ENCODE measurements at regions of chr6 and their contacts with region 1.

Region 1: GRCh38 chr6:148464319-148465010 is 121.8 kb downstream of the SASH1 start:
- DNase-seq: peak; percentile 83
- H3K4me3 ChIP-seq: no peak overlapping the region
- H3K27ac ChIP-seq: peak overlapping the region in 1 of 4 donors; percentile 50
- H3K4me1 ChIP-seq: peaks cover 0 to 40% (median 28%) of the 10 kb centered on the region in 4 donors
- H3K27me3 ChIP-seq: no peaks in the 10 kb centered on the region
- CTCF ChIP-seq: peak; percentile 84 to 93 (median 87)
- EP300 ChIP-seq: no peak
- POLR2A ChIP-seq: no peak

Region 2: GRCh38 chr6:147506704-147507114 is 957.8 kb before region 1 on chr6:
- intact Hi-C with region 1: loop called (anchors 5 kb)
- DNase-seq: peak; percentile 76
- H3K4me3 ChIP-seq: peak overlapping the region; percentile 38 to 58 (median 56)
- H3K27ac ChIP-seq: no peak overlapping the region
- H3K4me1 ChIP-seq: peaks cover 0 to 30% (median 23%) of the 10 kb centered on the region in 4 donors
- H3K27me3 ChIP-seq: peaks cover 0 to 19% (median 0%) of the 10 kb centered on the region in 3 donors
- CTCF ChIP-seq: peak; percentile 59 to 84 (median 78)
- EP300 ChIP-seq: no peak
- POLR2A ChIP-seq: no peak

Region 3: DNA sequence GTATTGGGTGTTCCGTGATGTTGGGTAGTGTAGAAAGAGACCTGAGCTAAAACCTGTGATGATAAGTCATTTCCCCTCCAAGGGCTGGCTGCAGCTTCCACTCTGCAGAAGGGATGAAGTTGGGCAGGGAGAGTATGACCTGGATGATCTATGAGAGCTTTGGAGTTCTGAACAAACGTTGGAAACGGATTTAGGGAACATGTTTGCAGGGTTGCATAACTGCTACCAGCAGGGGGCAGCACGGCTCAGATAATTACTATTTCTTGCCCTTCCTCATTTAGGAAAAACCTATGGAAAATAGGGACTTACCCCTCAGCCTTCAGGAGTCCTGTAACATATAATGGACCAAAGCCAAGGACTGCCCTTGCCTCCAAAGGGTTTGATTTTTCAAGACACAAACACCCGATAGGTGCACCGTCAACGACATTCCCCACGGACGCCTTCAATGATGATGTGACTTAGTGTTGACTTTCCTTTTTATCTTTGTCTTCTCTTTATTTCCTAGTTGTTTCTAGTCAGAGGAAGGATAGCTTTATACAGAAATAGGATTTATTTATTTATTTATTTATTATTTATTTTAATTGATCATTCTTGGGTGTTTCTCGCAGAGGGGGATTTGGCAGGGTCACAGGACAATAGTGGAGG is 286.8 kb before region 1 on chr6:
- intact Hi-C with region 1: loop called (anchors 2 kb)
- DNase-seq: peak; percentile 74
- H3K4me3 ChIP-seq: no peak overlapping the region
- H3K27ac ChIP-seq: no peak overlapping the region
- H3K4me1 ChIP-seq: no peaks in the 10 kb centered on the region
- H3K27me3 ChIP-seq: no peaks in the 10 kb centered on the region
- CTCF ChIP-seq: peak; percentile 77 to 87 (median 81)
- EP300 ChIP-seq: no peak
- POLR2A ChIP-seq: no peak

Region 4: GRCh38 chr6:148250975-148251685 is 213.3 kb before region 1 on chr6:
- intact Hi-C with region 1: loop called (anchors 5 kb)
- DNase-seq: no peak
- H3K4me3 ChIP-seq: no peak overlapping the region
- H3K27ac ChIP-seq: no peak overlapping the region
- H3K4me1 ChIP-seq: peaks cover 0 to 11% (median 4%) of the 10 kb centered on the region in 4 donors
- H3K27me3 ChIP-seq: no peaks in the 10 kb centered on the region
- CTCF ChIP-seq: peak in 3 of 4 experiments; percentile 44 to 53 (median 49)
- EP300 ChIP-seq: no peak
- POLR2A ChIP-seq: no peak

Region 5: GRCh38 chr6:148342357-148343046 is 122.0 kb before region 1 on chr6 and contains the start of gene SASH1:
- intact Hi-C with region 1: loop called (anchors 2 kb)
- DNase-seq: peak; percentile 84
- H3K4me3 ChIP-seq: peak within 1 kb of the TSS; percentile 64 to 80 (median 72)
- H3K27ac ChIP-seq: peak within 1 kb of the TSS; percentile 82 to 85 (median 84)
- H3K4me1 ChIP-seq: peaks cover 0 to 37% (median 28%) of the 10 kb centered on the region in 4 donors
- H3K27me3 ChIP-seq: no peaks in the 10 kb centered on the region
- CTCF ChIP-seq: no peak
- EP300 ChIP-seq: no peak
- POLR2A ChIP-seq: peak in 1 of 2 donors; percentile 26
- total RNA-seq, gene SASH1: 40.5 to 101 (median 61.3) TPM

Measured in sigmoid colon (tissue), 7 donors.